Gastrocnemius medialis (tissue), 4 donors: ENCODE measurements at regions of chr18 and their contacts with region 1.

Region 1: DNA sequence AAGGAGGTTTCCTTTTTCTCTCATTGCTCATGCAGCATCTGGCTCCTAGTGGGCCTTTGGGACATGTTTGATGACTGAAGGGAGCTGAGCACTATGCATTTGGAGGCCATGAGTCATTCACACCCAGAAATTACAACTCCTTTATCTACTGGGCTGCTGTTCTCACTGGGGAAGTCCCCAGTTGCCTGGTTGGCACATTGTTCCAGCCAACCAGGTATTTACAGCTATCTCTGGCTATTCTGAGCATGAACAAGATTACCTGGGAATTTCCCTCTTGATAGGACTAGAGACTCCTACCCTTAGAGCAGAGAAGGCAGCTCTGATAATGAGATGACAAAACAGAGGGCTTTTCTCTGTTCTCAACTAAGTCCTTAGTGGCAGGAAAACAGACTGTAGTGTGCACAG is 206.5 kb downstream of the SETBP1 start:
- DNase-seq: no peak
- ATAC-seq: peak; percentile 40 to 74
- H3K4me3 ChIP-seq: no peak overlapping the region
- H3K27ac ChIP-seq: no peak overlapping the region
- H3K4me1 ChIP-seq: peaks cover 32 to 33% of the 10 kb centered on the region in 2 donors
- H3K27me3 ChIP-seq: no peaks in the 10 kb centered on the region
- CTCF ChIP-seq: no peak
- POLR2A ChIP-seq: no peak

Region 2: DNA sequence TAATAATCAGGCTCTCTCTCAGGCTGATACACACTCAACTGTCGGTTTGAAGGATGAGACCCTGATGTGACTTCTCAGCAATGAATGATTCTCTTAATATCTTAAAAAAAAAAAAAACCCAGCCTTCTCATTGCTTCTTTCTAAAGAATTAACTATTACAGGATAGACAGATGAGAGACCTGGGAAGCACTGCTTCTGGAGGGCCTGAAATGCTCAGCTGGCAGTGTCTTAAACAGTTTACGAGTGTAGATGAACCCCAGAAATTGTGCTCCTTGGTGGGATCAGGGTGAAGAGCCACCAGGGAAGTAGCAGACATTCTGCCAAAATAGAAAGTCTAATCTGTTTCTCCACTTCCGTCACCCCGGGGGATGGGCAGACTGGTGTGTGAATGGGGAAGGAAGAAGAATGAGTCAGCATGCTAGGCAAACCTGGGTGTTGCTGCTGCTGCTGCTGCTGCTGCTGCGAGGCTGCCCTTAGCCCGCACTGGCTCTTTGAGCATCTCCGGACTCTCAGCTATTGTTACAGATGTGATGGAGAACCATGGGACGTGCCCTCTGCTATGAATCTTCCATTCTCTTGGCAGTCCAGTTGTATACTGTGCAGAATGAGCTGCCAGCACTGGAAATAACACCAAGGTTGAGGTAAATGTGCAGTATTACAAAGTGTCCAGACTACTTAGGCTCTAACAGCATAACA is 48.1 kb before region 1 on chr18:
- in situ Hi-C with region 1: no loop called
- intact Hi-C with region 1: loop called (anchors 5 kb)
- DNase-seq: peak; percentile 54 to 73
- ATAC-seq: peak; percentile 63 to 75
- H3K4me3 ChIP-seq: no peak overlapping the region
- H3K27ac ChIP-seq: peak overlapping the region; percentile 48 to 60 (median 52)
- H3K4me1 ChIP-seq: peaks cover 55 to 58% of the 10 kb centered on the region in 2 donors
- H3K27me3 ChIP-seq: no peaks in the 10 kb centered on the region
- CTCF ChIP-seq: no peak
- POLR2A ChIP-seq: no peak